MCF 10A (cell line): ENCODE measurements at regions of chr14 and their contacts with region 1.

Region 1: DNA sequence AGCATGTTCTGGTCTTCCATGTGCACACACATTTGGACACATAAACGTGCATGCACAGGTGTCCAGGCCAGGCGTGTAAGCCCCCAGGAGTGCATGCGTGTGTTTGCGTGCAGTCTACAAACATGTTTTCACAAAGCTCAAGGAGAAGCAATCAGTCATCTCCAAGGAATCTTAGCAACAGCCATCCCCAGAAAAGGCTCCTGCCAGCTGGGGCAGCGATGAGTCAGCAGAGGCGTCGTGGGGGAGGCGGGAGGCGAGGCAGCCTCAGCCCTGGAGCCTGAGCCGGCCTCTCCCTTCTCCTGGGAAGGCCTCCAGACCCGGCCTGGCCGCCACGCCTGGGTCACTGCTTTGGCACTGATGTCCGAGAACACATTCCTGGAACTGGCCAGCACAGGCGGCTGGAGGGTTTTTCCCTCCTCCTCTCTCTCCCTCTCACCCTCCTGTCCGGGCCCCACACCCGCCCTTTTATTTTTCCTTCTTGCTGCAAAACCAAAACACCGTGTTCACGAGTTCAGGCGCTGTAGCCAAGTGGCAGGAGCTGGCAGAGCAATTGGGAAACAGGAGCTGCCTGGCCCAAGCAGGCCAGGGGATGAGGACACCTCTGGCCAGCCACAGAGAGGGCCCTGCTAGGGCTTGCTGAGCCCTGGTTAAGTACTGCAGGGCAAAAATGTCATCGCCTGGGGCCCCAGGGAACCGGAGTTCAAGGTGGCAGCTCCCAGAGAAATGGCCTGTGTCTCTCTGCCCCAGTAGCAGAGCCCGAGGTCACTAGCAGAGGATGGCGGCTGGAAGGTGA is 92.7 kb downstream of the LRRC74A start:
- DNase-seq: peak; percentile 98
- H3K4me3 Mint-ChIP-seq: peak overlapping the region; percentile 57
- H3K27ac Mint-ChIP-seq: peak overlapping the region; percentile 93
- H3K4me1 Mint-ChIP-seq: peaks cover 36% of the 10 kb centered on the region
- H3K27me3 Mint-ChIP-seq: no peaks in the 10 kb centered on the region
- CTCF ChIP-seq: no peak

Region 2: GRCh38 chr14:76936483-76936882 is 17.5 kb after region 1 on chr14:
- CTCF ChIA-PET with region 1: interaction called, 11 read pairs
- POLR2A ChIA-PET with region 1: interaction called, 15 read pairs
- intact Hi-C with region 1: no loop called
- DNase-seq: no peak
- H3K4me3 Mint-ChIP-seq: no peak overlapping the region
- H3K27ac Mint-ChIP-seq: no peak overlapping the region
- H3K4me1 Mint-ChIP-seq: peaks cover 6% of the 10 kb centered on the region
- H3K27me3 Mint-ChIP-seq: no peaks in the 10 kb centered on the region
- CTCF ChIP-seq: no peak

Region 3: DNA sequence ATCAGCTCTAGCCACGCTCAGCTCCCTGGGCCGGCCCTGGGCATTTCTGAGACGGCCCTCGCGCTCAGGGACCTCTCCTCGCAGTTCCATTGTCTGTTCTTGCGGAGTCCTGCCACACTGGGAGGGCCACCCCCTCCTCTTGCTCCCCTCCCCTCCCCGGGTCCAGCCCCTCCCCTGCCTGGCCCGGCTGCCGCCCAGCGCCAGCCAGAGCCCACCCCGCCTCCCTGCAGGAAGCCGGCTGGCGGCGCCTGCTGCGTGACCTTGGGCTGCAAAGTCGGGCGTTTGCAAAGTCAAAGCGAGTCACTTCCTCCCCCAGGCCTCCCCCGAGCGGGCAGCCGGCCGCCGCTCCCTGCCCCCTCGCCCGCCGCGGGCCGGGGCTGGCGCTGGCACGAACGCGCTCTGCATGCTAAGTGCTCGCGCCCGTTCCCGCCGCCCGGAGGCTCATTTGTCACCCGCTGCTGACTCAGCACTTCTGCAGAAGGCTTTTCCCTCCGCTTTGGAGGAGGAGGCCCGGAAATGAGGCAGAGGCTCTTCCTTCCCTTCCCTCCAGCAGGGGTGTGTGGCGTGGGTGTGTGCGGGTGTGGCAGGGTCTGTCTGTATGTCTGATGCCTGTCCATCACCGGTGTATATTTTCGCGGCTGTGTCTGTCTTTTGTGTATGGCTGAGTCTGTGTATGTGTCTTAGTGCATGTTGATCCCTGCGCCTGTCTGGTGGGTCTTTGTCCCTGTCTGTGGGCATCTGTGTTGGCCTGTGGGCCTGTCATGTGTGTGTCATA is 37.6 kb after region 1 on chr14:
- CTCF ChIA-PET with region 1: interaction called, 16 read pairs
- POLR2A ChIA-PET with region 1: interaction called, 120 read pairs
- intact Hi-C with region 1: loop called (anchors 2 kb)
- DNase-seq: peak; percentile 97
- H3K4me3 Mint-ChIP-seq: peak overlapping the region; percentile 49
- H3K27ac Mint-ChIP-seq: peak overlapping the region; percentile 92
- H3K4me1 Mint-ChIP-seq: peaks cover 55% of the 10 kb centered on the region
- H3K27me3 Mint-ChIP-seq: no peaks in the 10 kb centered on the region
- CTCF ChIP-seq: no peak

Region 4: DNA sequence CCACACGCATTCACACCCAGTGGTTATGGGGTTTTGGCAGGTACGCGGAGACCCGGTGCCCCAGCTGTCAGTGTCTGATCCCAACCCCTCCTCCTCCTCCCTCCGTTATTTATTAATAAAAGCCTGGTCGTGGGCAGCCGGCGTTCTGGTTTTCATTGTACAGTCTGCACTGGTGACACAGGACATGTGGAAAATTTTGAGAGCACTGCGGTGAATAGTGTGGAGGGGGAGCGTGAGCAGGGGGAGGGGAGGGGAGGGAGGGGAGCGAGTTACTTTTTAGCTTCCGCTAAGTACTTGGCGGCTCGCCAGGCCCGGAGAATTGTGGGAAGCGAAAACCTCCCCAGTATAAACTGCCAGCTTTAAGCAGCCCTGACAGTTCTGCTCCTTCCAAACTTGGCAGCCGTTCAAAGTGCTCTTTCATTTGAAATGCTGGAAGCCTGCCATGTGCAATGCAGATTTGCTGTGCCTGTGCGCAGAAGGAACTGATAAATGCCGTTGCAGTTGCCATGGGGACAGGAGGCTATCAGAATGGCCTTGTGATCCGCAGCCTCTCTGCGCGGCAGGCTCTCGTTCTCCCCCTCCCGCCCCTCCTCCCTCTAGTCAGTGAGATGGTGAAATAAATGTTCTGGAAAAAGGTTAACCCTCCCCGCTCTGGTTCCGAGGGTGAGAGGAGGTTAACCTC is 121.3 kb after region 1 on chr14:
- CTCF ChIA-PET with region 1: interaction called, 28 read pairs
- POLR2A ChIA-PET with region 1: interaction called, 257 read pairs
- intact Hi-C with region 1: no loop called
- DNase-seq: peak; percentile 99
- H3K4me3 Mint-ChIP-seq: peak overlapping the region; percentile 54
- H3K27ac Mint-ChIP-seq: peak overlapping the region; percentile 82
- H3K4me1 Mint-ChIP-seq: peaks cover 59% of the 10 kb centered on the region
- H3K27me3 Mint-ChIP-seq: no peaks in the 10 kb centered on the region
- CTCF ChIP-seq: no peak

Region 5: DNA sequence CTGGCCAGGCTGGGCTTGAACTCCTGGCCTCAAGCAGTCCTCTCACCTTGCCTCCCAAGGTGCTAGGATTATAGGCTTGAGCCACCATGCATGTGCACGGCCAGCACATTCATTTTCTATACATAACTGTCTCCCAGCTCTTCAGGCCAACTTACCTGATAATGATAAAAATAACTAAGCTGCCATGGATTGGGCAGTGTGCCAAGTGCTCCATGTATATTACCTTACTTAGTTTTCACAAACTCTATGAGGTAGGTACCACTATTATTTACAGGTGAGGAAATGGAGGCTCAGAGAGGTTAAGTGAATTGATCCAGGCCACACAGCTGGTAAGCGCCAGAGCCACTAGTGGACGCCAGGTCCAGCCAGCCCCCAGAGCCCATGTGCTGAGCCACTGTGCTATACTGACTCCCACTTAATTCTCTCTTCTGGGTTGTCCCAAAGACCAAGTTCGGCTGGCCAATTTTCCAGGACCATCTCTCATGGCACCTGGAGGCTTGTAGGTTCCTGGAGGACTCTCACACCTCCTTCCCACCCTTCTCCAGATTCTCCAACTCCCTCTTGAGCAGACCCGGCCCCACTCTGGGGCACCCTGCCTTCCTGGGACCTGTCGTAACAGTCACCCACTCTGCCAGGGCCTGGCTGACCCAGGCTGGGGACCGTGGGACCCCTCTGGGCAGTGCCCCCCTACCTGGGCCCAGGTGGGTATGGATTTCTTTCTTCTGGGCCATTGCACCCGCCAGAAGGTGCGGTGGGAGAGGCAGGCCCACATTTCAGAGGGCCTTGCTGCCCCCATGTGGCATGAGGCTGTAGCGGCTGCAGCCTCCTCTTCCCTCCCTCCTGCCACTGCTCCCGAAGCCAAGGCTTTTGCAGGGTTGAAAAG is 148.9 kb after region 1 on chr14:
- CTCF ChIA-PET with region 1: interaction called, 496 read pairs
- POLR2A ChIA-PET with region 1: interaction called, 25 read pairs
- intact Hi-C with region 1: loop called (anchors 1 kb)
- DNase-seq: peak; percentile 74
- H3K4me3 Mint-ChIP-seq: no peak overlapping the region
- H3K27ac Mint-ChIP-seq: no peak overlapping the region
- H3K4me1 Mint-ChIP-seq: peaks cover 23% of the 10 kb centered on the region
- H3K27me3 Mint-ChIP-seq: no peaks in the 10 kb centered on the region
- CTCF ChIP-seq: peak; percentile 87

Region 6: DNA sequence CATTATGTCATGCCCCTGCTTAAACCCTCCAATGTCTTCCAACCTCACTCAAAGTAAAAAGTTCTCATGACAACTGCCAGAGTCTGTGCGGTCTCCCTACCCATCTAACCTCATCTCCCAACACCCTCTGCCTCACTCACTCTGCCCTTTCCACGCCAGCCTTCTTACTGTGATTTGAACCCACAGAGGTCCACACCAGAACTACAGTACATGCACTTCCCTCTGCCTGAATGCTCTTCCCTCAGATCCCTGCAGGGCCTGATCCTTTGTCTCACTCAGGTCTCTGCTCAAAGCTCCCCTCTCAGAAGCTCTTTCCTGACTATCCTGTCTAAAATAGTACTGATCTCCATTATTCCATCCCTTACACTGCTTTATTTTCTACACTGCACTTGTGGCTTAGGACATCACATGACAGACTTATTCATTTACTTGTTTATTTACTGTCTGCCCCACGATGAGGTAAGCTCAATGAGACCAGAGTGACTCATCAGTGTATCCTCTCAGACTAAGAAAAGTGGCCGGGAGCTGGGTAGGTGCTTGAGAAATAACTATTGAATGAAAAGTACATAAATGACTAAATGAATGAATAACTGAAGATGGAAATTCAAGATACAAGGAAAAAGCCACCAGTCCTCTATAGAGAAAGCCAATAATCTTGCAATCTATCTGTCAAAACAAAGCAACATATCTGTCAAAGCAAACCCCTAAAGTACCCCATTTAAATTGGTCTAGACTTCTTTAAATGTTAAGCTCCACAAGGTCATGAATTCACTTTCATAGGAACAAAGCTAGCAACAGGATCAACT is 384.7 kb after region 1 on chr14:
- CTCF ChIA-PET with region 1: no interaction called
- POLR2A ChIA-PET with region 1: no interaction called
- intact Hi-C with region 1: no loop called
- DNase-seq: peak; percentile 96
- H3K4me3 Mint-ChIP-seq: peak overlapping the region; percentile 58
- H3K27ac Mint-ChIP-seq: peak overlapping the region; percentile 97
- H3K4me1 Mint-ChIP-seq: peaks cover 33% of the 10 kb centered on the region
- H3K27me3 Mint-ChIP-seq: no peaks in the 10 kb centered on the region
- CTCF ChIP-seq: no peak